HCT116 (cell line): ENCODE measurements at regions of chr6 and their contacts with region 1.

Region 1: DNA sequence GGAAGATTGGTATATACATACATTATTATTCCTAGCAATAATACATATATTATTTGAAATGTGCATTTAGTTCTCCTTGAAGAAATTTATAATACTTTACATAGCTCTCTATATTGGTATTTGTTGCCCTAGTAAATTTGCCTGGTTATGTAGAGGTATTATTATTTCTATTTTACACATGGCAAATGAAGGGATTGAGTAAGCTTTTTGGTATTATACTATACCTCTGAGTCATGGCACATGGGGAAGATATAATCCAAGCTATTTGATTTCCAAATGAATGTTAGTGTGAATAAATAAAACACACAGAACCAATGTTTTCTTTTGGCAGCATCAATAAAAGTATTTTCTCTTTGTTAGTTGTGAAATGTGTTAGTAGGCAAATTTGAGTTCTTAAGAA is 409.6 kb upstream of the SLC35B3 start:
- DNase-seq: no peak
- ATAC-seq: no peak
- H3K4me3 ChIP-seq: no peak overlapping the region
- H3K27ac ChIP-seq: no peak overlapping the region
- H3K4me1 ChIP-seq: no peaks in the 10 kb centered on the region
- H3K27me3 ChIP-seq: no peaks in the 10 kb centered on the region
- CTCF ChIP-seq: no peak
- POLR2A ChIP-seq: no peak
- RAD21 ChIP-seq: no peak

Region 2: GRCh38 chr6:8881663-8882062 is 36.7 kb after region 1 on chr6:
- CTCF ChIA-PET with region 1: no interaction called
- POLR2A ChIA-PET with region 1: no interaction called
- RAD21 ChIA-PET with region 1: no interaction called
- intact Hi-C with region 1: loop called (anchors 1 kb)
- DNase-seq: no peak
- ATAC-seq: no peak
- H3K4me3 ChIP-seq: no peak overlapping the region
- H3K27ac ChIP-seq: no peak overlapping the region
- H3K4me1 ChIP-seq: no peaks in the 10 kb centered on the region
- H3K27me3 ChIP-seq: no peaks in the 10 kb centered on the region; the same call in 1 of the 2 replicates
- CTCF ChIP-seq: no peak
- POLR2A ChIP-seq: no peak
- RAD21 ChIP-seq: no peak